ENCODE measurements at regions of chr4 and their contacts with region 1.

Region 1: DNA sequence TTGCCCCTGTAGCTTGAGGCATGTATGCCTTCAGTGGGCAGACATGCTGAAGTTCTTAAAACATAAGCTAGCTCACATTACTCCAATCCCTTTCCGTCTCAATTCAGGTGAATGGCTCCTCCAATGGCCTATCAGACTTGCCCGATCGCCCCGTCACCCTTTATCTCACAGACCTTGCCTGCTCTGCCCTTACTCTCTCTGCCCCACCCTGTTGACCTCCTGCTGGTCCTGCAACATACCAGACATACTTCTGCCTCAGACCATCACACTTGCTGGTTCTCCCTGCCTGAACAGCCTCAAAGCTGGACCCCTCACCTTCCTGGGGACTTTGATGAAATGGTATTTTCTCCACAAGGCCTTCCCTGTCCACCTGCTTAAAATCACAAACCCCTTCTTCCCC is 340.0 kb upstream of the NR3C2 start:
- DNase-seq: peak; percentile 76 to 89
- H3K4me3 ChIP-seq: no peak overlapping the region
- H3K4me3 Mint-ChIP-seq: peak overlapping the region; percentile 49
- H3K27ac Mint-ChIP-seq: peak overlapping the region; percentile 80
- H3K4me1 ChIP-seq: peaks cover 24% of the 10 kb centered on the region
- H3K4me1 Mint-ChIP-seq: peaks cover 19% of the 10 kb centered on the region
- H3K27me3 ChIP-seq: no peaks in the 10 kb centered on the region
- H3K27me3 Mint-ChIP-seq: no peaks in the 10 kb centered on the region
- CTCF ChIP-seq: no peak

Region 2: GRCh38 chr4:148515248-148515647 is 267.0 kb before region 1 on chr4:
- CTCF ChIA-PET with region 1: no interaction called
- POLR2A ChIA-PET with region 1: no interaction called
- intact Hi-C with region 1: no loop called
- DNase-seq: no peak
- H3K4me3 ChIP-seq: no peak overlapping the region
- H3K4me3 Mint-ChIP-seq: no peak overlapping the region
- H3K27ac Mint-ChIP-seq: no peak overlapping the region
- H3K4me1 ChIP-seq: no peaks in the 10 kb centered on the region
- H3K4me1 Mint-ChIP-seq: no peaks in the 10 kb centered on the region
- H3K27me3 ChIP-seq: no peaks in the 10 kb centered on the region
- H3K27me3 Mint-ChIP-seq: peaks cover 2% of the 10 kb centered on the region
- CTCF ChIP-seq: no peak

Region 3: DNA sequence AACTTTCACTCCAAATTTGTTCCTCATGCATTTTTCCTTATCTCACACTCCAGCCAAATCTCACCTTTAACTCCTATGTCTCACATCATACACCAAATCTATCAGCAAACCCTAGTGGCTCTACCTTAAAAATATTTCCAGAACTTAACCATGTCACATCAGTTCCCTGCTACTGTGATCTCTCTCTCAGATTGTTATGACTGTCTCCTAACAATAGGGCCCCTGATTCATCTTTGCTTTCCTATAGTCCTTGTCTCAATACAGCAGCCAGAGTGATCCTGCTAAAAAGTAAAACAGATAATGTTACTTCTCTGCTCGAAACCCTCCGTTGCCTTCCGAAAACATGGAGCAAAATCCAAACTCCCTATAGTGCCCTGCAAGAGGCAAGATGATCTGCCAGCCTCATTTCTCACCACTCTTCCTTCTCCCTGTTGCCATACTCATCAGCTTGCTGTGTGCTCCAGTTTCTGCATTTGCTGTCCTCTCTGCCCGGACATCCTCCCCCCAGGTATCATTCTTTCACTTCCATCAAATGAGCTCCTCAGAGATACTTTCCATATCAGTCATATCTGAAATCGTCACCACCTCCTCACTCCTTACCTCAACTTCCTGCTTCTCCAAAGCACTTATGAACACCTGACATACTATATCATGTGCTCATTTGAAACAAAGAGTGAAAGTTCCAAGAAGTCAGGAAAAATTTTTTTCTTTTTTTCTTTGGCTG is 46.7 kb before region 1 on chr4:
- CTCF ChIA-PET with region 1: no interaction called
- POLR2A ChIA-PET with region 1: no interaction called
- intact Hi-C with region 1: no loop called
- DNase-seq: no peak
- H3K4me3 ChIP-seq: no peak overlapping the region
- H3K4me3 Mint-ChIP-seq: no peak overlapping the region
- H3K27ac Mint-ChIP-seq: no peak overlapping the region
- H3K4me1 ChIP-seq: no peaks in the 10 kb centered on the region
- H3K4me1 Mint-ChIP-seq: no peaks in the 10 kb centered on the region
- H3K27me3 ChIP-seq: no peaks in the 10 kb centered on the region
- H3K27me3 Mint-ChIP-seq: no peaks in the 10 kb centered on the region
- CTCF ChIP-seq: no peak

Region 4: GRCh38 chr4:148795156-148795864 is 13.1 kb after region 1 on chr4:
- CTCF ChIA-PET with region 1: no interaction called
- POLR2A ChIA-PET with region 1: no interaction called
- intact Hi-C with region 1: loop called (anchors 1 kb)
- DNase-seq: peak; percentile 57 to 70
- H3K4me3 ChIP-seq: no peak overlapping the region
- H3K4me3 Mint-ChIP-seq: peak overlapping the region; percentile 2
- H3K27ac Mint-ChIP-seq: peak overlapping the region; percentile 69
- H3K4me1 ChIP-seq: peaks cover 22% of the 10 kb centered on the region
- H3K4me1 Mint-ChIP-seq: peaks cover 18% of the 10 kb centered on the region
- H3K27me3 ChIP-seq: no peaks in the 10 kb centered on the region
- H3K27me3 Mint-ChIP-seq: no peaks in the 10 kb centered on the region
- CTCF ChIP-seq: no peak

Region 5: DNA sequence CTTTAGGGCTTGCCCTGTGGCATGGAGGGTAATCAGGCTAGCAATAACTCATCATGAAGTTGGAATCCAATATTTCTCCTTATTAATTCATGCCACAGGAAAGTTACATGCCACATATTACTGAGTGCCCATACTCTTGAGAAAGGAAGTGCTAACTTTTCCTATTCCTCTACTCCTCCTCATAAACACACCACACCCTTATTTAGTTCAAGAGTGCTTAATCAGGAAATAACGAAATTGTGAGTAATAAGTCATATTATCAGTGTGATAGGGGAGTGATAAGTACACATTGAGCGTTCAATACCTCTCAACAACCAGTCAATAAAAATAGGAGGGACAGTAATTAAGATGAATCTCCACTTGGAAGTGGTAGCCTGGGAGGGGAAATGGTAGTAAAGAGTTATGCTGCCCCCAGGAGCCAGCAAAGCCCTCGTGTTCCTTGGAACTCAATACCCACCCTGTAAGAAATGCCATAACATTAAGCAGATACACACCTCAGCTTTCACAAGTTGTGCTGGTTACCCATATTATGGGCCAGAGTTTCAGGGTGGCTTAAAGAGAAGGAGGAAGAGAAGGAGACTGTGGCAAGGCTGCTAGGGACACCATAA is 69.9 kb after region 1 on chr4:
- CTCF ChIA-PET with region 1: no interaction called
- POLR2A ChIA-PET with region 1: no interaction called
- intact Hi-C with region 1: loop called (anchors 5 kb)
- DNase-seq: no peak
- H3K4me3 ChIP-seq: no peak overlapping the region
- H3K4me3 Mint-ChIP-seq: no peak overlapping the region
- H3K27ac Mint-ChIP-seq: no peak overlapping the region
- H3K4me1 ChIP-seq: peaks cover 16% of the 10 kb centered on the region
- H3K4me1 Mint-ChIP-seq: peaks cover 10% of the 10 kb centered on the region
- H3K27me3 ChIP-seq: no peaks in the 10 kb centered on the region
- H3K27me3 Mint-ChIP-seq: no peaks in the 10 kb centered on the region
- CTCF ChIP-seq: no peak

Measured in Caco-2 (cell line).